A673 (cell line): ENCODE measurements at regions of chr11 and their contacts with region 1.

Region 1: DNA sequence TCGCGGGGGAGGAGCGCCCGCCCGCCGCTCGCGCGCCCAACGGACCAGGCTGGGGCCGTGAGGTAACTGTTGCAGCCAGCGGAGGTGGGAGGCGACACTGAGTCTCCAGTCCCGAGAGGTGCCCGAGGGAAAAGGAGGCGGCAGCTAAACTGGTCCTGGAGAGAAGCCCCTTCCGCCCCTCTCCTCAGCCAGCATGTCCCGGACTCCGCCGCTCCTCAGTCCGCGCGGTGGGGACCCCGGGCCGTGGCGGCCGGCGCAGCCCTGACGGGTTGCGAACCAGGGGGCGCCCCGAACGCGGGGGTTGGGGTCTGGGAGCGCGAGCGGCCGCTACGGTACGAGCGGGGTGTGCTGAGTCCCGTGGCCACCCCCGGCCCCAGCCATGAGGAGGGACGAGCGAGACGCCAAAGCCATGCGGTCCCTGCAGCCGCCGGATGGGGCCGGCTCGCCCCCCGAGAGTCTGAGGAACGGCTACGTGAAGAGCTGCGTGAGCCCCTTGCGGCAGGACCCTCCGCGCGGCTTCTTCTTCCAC is at the start of gene PDE3B:
- DNase-seq: peak; percentile 66
- H3K4me3 ChIP-seq: peak within 1 kb of the TSS; percentile 70
- H3K27ac ChIP-seq: no peak within 1 kb of the TSS
- H3K4me1 ChIP-seq: peaks cover 7% of the 10 kb centered on the region
- H3K27me3 ChIP-seq: peaks cover 25% of the 10 kb centered on the region
- CTCF ChIP-seq: no peak
- total RNA-seq, gene PDE3B: 3.8 and 4.8 TPM in 2 replicates

Region 2: GRCh38 chr11:14583252-14584034 is 60.3 kb before region 1 on chr11:
- CTCF ChIA-PET with region 1: no interaction called
- POLR2A ChIA-PET with region 1: no interaction called
- intact Hi-C with region 1: loop called (anchors 10 kb)
- DNase-seq: no peak
- H3K4me3 ChIP-seq: no peak overlapping the region
- H3K27ac ChIP-seq: no peak overlapping the region
- H3K4me1 ChIP-seq: no peaks in the 10 kb centered on the region
- H3K27me3 ChIP-seq: no peaks in the 10 kb centered on the region
- CTCF ChIP-seq: no peak

Region 3: DNA sequence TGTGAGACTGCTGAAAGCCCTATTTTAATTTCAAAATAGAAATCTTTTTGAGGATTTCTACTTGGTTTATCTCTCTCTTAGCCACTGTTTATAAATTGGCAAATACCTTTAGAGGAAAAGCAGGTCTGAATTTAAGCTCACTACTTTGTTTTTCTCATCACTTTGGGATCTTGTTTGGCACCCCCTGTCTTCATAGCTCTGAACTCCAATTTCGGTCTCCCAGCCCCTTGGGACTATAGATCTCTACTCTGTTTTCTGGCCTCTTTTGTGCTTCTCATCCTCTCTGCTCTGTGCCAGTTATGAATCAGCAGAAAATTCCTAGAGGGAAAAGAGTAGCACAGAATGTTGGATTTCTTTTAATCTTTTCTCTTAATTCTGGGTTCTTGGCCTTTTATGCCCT is 130.0 kb after region 1 on chr11:
- CTCF ChIA-PET with region 1: no interaction called
- POLR2A ChIA-PET with region 1: no interaction called
- intact Hi-C with region 1: loop called (anchors 10 kb)
- DNase-seq: peak; percentile 58
- H3K4me3 ChIP-seq: no peak overlapping the region
- H3K27ac ChIP-seq: no peak overlapping the region
- H3K4me1 ChIP-seq: no peaks in the 10 kb centered on the region
- H3K27me3 ChIP-seq: no peaks in the 10 kb centered on the region
- CTCF ChIP-seq: peak; percentile 52